ENCODE measurements at regions of chr11 and their contacts with region 1.

Region 1: DNA sequence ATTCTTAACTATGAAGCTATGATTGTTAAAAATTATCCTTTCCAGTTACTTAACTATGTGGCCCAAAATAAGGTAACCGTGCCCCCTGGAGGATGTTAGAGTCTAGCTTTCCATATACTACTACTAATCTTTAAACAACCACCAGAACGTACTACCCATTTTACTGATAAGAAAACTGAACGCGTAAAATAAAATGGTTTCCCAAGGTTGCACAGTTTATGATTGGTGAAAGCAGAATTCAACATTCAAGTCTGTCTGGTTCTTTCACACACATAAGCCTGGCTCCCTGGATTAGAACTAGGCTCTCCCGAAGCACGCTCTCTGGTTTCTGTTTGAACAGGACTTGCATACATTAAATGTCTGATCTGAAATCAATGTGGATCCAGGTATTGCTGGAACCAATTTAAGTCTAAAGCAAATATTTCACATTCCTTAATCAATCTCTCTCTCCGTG is 437.9 kb upstream of the CCDC90B start:
- DNase-seq: no peak
- H3K4me3 ChIP-seq: peak overlapping the region in 3 of 4 donors; percentile 7 to 13 (median 7)
- H3K27ac ChIP-seq: peak overlapping the region in 2 of 4 donors; percentile 10 to 58
- H3K4me1 ChIP-seq: peaks cover 0 to 12% (median 0%) of the 10 kb centered on the region in 4 donors
- H3K27me3 ChIP-seq: no peaks in the 10 kb centered on the region
- CTCF ChIP-seq: peak in 4 of 5 experiments; percentile 16 to 26 (median 21)
- EP300 ChIP-seq: no peak
- POLR2A ChIP-seq: no peak

Region 2: GRCh38 chr11:83292709-83293456 is 431.2 kb before region 1 on chr11:
- in situ Hi-C with region 1: loop called in 1 of 4 experiments (anchors 10 kb)
- intact Hi-C with region 1: loop called (anchors 10 kb)
- DNase-seq: no peak
- H3K4me3 ChIP-seq: no peak overlapping the region
- H3K27ac ChIP-seq: no peak overlapping the region
- H3K4me1 ChIP-seq: no peaks in the 10 kb centered on the region
- H3K27me3 ChIP-seq: no peaks in the 10 kb centered on the region
- CTCF ChIP-seq: peak; percentile 52 to 66 (median 63)
- EP300 ChIP-seq: no peak
- POLR2A ChIP-seq: no peak

Region 3: GRCh38 chr11:83306200-83307080 is 417.6 kb before region 1 on chr11:
- in situ Hi-C with region 1: loop called in 1 of 4 experiments (anchors 25 kb)
- intact Hi-C with region 1: no loop called
- DNase-seq: no peak
- H3K4me3 ChIP-seq: no peak overlapping the region
- H3K27ac ChIP-seq: no peak overlapping the region
- H3K4me1 ChIP-seq: no peaks in the 10 kb centered on the region
- H3K27me3 ChIP-seq: no peaks in the 10 kb centered on the region
- CTCF ChIP-seq: no peak
- EP300 ChIP-seq: no peak
- POLR2A ChIP-seq: no peak

Region 4: GRCh38 chr11:83648610-83649527 is 75.2 kb before region 1 on chr11:
- in situ Hi-C with region 1: no loop called
- intact Hi-C with region 1: no loop called
- DNase-seq: no peak
- H3K4me3 ChIP-seq: no peak overlapping the region
- H3K27ac ChIP-seq: no peak overlapping the region
- H3K4me1 ChIP-seq: no peaks in the 10 kb centered on the region
- H3K27me3 ChIP-seq: no peaks in the 10 kb centered on the region
- CTCF ChIP-seq: no peak
- EP300 ChIP-seq: no peak
- POLR2A ChIP-seq: no peak

Region 5: DNA sequence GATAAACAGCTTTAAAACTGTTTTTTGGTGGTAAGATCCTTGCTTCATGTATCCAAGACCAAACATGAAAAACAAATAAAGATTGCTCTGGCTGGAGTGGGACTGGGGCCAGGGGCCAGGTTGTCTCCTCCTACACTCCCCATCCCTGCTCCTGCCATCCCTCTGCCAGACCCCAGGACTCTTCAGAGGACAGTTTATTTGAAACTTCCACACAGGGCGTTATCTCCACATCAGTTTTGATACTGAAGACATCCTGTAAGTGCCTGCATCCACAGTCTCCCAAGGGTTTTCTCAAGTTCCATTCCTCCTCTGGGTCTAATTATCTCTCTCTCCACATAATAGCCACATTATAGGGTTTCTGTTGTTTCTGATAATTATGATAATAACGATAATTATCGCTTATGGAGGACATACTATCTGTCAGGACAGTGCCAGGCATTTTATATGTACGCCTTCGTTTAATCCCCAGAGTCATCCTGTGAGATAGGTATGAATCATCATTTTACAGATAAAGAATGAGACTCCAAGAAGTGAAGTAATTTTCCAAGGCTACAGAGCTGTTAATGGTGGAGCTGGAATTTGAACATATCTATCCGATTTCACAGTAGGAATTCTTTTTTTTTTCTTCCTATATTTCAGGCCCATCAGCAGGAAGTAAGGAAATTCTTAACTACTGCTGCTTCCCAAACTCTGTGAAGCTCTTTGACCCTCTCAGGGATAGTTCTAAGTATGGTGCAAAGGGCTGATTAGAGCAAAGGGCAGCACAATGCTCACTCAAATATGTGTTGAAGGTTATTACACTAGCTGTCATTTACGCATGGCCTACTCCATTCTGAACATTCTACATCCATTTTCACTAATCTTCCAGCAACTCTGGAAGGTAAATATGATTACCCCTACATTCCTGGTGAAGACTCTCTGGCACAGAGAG is 50.2 kb after region 1 on chr11:
- in situ Hi-C with region 1: no loop called
- intact Hi-C with region 1: loop called (anchors 2 kb)
- DNase-seq: no peak
- H3K4me3 ChIP-seq: no peak overlapping the region
- H3K27ac ChIP-seq: no peak overlapping the region
- H3K4me1 ChIP-seq: no peaks in the 10 kb centered on the region
- H3K27me3 ChIP-seq: no peaks in the 10 kb centered on the region
- CTCF ChIP-seq: no peak
- EP300 ChIP-seq: no peak
- POLR2A ChIP-seq: no peak

Region 6: GRCh38 chr11:83836883-83837654 is 113.0 kb after region 1 on chr11:
- in situ Hi-C with region 1: no loop called
- intact Hi-C with region 1: no loop called
- DNase-seq: peak; percentile 13
- H3K4me3 ChIP-seq: no peak overlapping the region
- H3K27ac ChIP-seq: no peak overlapping the region
- H3K4me1 ChIP-seq: peaks cover 0 to 4% (median 0%) of the 10 kb centered on the region in 4 donors
- H3K27me3 ChIP-seq: no peaks in the 10 kb centered on the region
- CTCF ChIP-seq: peak in 4 of 5 experiments; percentile 19 to 48 (median 40)
- EP300 ChIP-seq: no peak
- POLR2A ChIP-seq: no peak